ENCODE measurements at regions of chr3 and their contacts with region 1.

Region 1: DNA sequence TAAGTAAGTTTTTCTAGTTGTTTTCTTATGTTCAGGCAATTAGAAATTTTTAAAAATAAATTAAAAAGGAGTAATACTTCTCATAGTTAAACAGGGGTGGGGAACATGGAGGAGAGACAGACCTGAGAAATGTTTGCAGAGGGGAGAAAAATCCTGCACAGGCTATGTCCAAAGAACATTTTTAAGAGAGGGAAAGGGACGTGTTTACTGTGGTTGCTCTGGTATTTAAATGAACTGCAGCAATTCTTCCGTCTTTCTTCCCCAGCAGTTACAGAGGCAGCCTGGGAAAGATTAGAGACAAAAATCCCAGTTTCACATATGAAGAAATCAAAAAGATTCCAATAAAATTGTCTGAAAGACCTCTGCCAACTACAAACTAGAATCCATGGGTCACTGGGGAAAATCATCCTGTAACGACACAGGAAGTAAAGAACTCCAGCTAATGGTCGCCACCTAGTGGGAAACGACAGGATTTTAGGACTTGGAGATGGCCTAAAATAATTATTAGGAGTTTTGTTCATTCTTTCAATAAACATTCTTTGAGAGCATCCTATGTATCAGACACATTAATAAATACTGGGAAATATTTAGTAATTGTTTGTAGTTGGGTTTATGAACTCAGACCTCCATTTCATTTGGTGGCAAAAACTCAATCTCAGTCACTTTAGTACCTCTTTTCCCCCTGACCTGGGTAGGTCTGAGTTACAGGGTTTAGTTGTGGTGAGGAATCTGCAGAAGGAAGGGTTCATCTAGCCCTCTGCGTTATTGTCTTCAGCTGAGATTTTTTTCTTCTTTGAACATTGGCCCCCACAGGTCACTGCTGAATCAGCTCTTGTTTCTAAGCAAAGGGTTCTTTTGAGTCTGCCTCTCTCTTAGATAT is 69.9 kb upstream of the GOLIM4 start:
- DNase-seq: peak in 3 of 6 donors; percentile 43 to 71 (median 63)
- ATAC-seq: peak; percentile 87 to 99 (median 94)
- H3K4me3 ChIP-seq: no peak overlapping the region
- H3K27ac ChIP-seq: no peak overlapping the region
- H3K4me1 ChIP-seq: no peaks in the 10 kb centered on the region
- H3K27me3 ChIP-seq: no peaks in the 10 kb centered on the region
- CTCF ChIP-seq: peak; percentile 37 to 66 (median 48)

Region 2: GRCh38 chr3:167978031-167978430 is 187.6 kb before region 1 on chr3:
- intact Hi-C with region 1: no loop called
- DNase-seq: no peak
- ATAC-seq: peak in 1 of 4 donors; percentile 31
- H3K4me3 ChIP-seq: no peak overlapping the region
- H3K27ac ChIP-seq: no peak overlapping the region
- H3K4me1 ChIP-seq: peaks cover 0 to 3% (median 0%) of the 10 kb centered on the region in 3 donors
- H3K27me3 ChIP-seq: no peaks in the 10 kb centered on the region
- CTCF ChIP-seq: no peak

Region 3: DNA sequence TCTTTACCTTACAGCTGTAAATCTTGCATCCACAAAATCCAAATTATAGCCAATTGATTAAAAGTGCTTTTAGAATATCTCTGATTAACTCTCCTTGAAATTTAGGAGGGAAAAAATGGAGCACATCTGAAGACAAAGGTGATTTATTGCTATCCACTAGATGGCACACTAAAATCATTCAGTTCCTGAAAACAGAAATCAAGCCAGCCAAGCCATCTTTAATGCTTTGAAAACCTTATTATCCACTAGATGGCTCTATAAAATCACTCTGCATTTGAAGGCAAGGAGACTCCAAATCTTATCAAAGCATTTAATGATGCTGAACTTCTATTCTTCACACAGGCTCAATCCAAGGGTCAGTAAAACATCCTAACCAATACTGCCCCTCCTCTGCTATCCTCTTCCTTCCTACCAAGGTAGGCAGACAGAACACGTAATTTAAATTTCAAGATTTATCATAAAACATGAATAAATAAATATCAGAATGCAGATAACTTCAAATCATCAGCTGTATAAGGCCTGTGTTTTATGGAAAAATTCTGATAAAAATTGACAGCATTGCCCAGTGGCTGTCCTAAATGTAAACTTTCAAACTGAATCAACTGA is 118.3 kb before region 1 on chr3:
- intact Hi-C with region 1: loop called (anchors 5 to 10 kb)
- DNase-seq: peak in 1 of 6 donors; percentile 21
- ATAC-seq: peak; percentile 76 to 96 (median 92)
- H3K4me3 ChIP-seq: no peak overlapping the region
- H3K27ac ChIP-seq: no peak overlapping the region
- H3K4me1 ChIP-seq: peaks cover 0 to 7% (median 5%) of the 10 kb centered on the region in 3 donors
- H3K27me3 ChIP-seq: no peaks in the 10 kb centered on the region
- CTCF ChIP-seq: peak in 3 of 4 donors; percentile 59 to 75 (median 67)

Region 4: GRCh38 chr3:168197162-168197561 is 31.5 kb after region 1 on chr3:
- intact Hi-C with region 1: no loop called
- DNase-seq: no peak
- ATAC-seq: peak in 3 of 4 donors; percentile 31 to 45 (median 35)
- H3K4me3 ChIP-seq: no peak overlapping the region
- H3K27ac ChIP-seq: no peak overlapping the region
- H3K4me1 ChIP-seq: no peaks in the 10 kb centered on the region
- H3K27me3 ChIP-seq: peaks cover 0 to 3% (median 0%) of the 10 kb centered on the region in 4 donors
- CTCF ChIP-seq: no peak

Measured in pancreas (tissue), 10 donors.